ENCODE measurements at regions of chr10 and their contacts with region 1.

Region 1: DNA sequence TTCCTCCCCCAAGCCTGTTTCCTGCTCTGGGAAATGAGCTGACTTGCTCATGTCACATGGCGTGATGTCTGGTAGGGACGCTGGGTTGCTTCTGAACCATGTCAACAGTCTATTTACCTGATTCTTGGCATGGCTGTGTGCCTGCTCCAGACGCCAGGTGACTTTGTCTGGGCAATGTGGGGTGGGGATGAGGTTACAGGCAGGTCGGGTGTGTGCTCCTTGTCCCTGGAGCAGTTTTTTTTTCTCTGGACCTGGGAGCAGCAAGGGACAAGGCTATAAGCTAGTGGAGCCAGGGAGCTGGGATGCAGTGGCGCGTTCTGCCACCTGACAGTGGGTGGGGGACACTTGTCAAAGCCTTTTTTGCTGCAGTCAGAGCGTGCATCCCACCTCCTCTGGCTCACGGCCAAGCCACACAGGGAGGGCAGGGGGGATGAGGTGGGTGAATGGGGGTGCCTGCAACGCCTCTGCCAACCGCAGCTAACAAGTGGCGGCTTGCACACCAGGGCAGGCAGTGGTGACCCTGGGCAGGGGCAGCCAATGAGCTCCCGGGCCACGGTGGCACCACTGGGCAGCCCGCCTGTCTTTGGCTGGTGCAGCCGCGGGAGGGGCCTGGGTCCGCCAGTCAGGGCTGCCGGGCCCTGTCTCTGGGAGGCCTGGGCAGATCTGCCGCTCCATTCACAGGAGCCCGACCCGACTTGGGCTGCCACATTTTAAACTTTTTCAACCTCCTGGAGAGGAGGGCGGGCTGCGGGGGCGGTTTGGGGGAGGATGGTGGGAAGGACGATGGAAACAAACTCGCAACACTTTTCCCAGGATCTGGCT is 22.9 kb downstream of the DNAJB12 start:
- DNase-seq: peak; percentile 97
- H3K27ac ChIP-seq: peak overlapping the region; percentile 100
- CTCF ChIP-seq: no peak

Region 2: DNA sequence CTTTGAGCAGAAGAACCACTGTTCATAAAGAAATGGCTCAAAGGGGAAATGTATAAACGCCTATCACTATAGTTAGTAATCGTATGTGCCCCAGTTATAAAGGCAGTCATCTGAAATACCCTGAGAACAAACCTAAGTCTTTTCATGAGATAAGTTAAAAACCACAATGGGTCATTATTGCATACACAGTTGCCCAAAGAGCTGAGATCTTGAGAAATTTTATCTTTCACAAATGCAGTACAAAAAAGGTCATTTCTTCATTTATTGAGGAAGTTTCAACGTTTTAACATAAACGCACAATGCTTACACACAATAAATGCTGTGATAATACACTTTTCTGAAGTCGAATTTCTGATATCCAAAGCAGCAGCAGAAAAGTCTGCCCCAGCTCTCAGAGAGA is 179.6 kb after region 1 on chr10:
- CTCF ChIA-PET with region 1: no interaction called
- POLR2A ChIA-PET with region 1: no interaction called
- DNase-seq: no peak
- H3K27ac ChIP-seq: no peak overlapping the region
- CTCF ChIP-seq: no peak

Region 3: DNA sequence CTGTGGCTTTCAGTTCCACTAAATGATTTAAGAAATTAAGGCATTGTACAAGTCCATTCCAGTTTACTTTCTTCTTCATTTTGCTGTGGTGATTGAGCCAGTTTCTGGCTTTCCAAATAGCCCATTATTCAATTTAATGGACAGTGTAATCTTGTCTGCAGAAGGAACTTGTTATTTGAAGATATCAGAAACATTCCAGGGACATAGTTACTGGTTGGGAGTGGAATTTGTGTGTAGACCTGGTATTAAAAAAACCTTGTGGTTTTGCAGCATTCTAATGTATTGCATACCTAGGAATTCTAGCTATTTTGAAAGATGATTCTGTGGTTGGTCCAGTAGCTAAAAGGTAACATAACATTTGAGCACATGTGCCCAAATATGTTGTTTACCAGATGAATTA is 432.3 kb after region 1 on chr10:
- CTCF ChIA-PET with region 1: no interaction called
- POLR2A ChIA-PET with region 1: interaction called, 10 read pairs
- DNase-seq: peak; percentile 54
- H3K27ac ChIP-seq: no peak overlapping the region
- CTCF ChIP-seq: no peak